ENCODE measurements at regions of chr7 and their contacts with region 1.

Region 1: DNA sequence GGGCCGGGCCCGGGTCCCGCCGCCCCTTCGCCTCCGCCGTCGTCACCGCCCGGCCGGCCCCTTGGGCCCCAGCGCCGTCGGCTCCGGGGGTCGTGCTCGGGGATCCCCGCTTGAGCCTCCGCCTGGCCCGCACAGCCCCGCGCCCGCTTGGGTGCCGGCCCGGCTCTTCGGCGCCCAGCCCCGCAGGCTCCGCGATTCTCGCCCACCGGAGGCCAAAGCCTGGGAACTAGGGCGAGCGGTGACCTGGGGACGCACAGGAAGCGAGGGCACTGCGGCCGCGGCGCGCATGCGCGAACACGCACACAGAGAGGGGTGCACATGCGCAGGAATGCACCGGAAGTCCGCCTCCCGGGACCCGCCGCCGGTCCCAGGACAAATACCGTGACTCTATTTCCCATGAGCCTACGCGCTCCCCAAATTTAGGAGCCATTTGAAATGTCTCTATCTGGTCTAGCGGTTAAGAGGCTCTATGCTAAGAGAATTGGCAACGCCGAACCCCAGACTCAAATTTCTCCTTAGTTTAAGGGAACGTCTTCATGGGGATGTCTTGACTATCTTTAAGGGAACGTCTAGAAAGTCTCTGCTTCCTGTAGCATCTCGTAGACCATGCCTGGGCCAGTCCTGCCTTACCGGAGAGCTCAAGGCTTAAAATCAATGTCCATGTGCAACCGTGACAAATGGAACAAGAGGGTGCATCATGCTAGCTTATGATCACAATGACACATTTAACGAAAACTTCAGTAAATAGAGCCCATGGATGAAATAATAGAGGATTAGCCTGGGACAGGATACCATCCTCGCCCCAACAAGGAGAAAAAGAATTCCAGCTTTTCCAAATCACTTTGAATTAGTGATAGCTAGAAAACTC is at the start of gene ZNF12:
- DNase-seq: peak; percentile 98
- ATAC-seq: peak; percentile 95
- H3K4me3 Mint-ChIP-seq: peak within 1 kb of the TSS; percentile 86
- H3K27ac Mint-ChIP-seq: peak within 1 kb of the TSS; percentile 86
- H3K4me1 Mint-ChIP-seq: peaks cover 36% of the 10 kb centered on the region
- H3K27me3 Mint-ChIP-seq: no peaks in the 10 kb centered on the region
- total RNA-seq, gene ZNF12: 22.4 to 23.2 TPM

Region 2: DNA sequence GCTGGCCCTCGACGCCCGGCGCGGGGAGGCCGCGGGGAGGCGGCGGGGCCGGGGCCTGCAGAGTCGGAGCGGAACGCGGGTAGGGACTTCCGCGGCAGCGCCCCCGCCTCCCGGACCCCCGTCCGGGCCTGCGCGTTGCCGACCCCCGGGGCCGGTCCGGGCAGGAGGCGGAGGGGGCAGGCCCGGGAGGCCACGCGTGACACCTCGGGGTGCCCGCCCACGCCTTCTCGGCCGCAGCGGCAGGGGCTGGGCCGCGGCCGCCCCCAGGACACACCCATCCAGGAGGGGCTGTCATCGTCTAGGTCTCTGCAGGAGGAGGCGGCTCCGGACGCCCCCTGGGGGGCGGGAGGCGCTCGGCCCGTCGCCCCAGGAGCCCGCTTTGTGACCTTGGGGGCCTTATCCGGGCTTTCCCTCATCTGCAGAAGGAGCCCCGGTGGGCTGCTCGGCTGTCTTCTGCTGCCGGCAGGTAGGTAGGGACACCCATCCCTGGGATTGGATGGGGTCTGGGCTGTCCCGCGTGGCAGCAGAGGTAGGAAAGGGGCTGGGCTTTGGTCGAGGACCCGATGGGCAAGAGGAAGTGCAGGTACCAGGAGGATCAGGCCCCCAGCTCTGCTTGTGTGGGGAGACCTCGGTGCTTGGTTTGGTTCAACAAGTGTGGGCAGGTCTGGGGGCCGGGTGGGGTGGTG is 69.2 kb before region 1 on chr7:
- CTCF ChIA-PET with region 1: no interaction called
- POLR2A ChIA-PET with region 1: no interaction called
- intact Hi-C with region 1: loop called in 1 of 2 experiments (anchors 1 kb)
- DNase-seq: peak; percentile 67
- ATAC-seq: peak; percentile 62
- H3K4me3 Mint-ChIP-seq: peak overlapping the region; percentile 81
- H3K27ac Mint-ChIP-seq: peak overlapping the region; percentile 84
- H3K4me1 Mint-ChIP-seq: peaks cover 26% of the 10 kb centered on the region
- H3K27me3 Mint-ChIP-seq: no peaks in the 10 kb centered on the region

Region 3: DNA sequence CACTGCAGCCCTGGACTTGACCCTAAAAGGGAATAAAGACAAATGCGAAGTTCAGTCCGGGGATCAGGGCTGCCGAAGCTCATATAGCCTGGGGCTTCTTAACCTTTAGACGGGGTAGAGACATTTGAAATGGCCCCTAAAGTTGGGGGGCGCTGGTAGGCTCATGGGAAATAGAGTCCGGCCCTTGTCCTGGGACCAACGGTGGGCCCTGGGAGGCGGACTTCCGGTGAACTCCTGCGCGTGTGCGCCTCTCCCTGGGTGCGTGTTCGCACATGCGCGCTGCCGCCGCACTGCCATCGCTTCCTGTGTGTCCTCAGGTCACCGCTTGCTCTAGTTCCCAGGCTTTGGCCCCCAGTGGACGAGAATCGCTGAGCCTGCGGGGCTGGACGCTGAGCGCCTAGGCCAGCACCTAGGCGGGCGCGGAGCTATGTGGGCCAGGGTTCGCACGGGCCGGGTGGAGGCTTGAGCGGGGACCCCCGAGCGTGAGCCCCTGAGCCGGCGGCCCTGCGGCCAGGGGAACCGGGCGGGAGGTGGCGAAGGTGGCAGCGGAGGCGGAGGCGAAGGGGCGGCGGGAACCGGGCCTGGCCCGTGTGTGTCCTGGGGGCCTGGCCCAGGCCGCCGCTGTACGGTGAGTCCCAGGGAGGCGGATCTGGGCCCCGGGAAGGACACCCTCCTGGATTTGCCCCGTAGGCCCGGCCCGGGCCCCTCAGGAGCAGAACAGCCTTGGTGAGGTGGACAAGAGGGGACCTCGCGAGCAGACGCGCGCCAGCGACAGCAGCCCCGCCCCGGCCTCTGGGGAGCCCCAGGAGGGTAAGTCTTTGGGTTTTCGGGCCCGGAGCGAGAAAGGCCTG is 22.8 kb after region 1 on chr7:
- CTCF ChIA-PET with region 1: no interaction called
- POLR2A ChIA-PET with region 1: interaction called, 5 read pairs
- intact Hi-C with region 1: loop called (anchors 1 kb)
- DNase-seq: peak; percentile 92
- ATAC-seq: peak; percentile 99
- H3K4me3 Mint-ChIP-seq: peak overlapping the region; percentile 87
- H3K27ac Mint-ChIP-seq: peak overlapping the region; percentile 93
- H3K4me1 Mint-ChIP-seq: peaks cover 23% of the 10 kb centered on the region
- H3K27me3 Mint-ChIP-seq: no peaks in the 10 kb centered on the region